K562 (cell line): ENCODE measurements at regions of chr17 and their contacts with region 1.

Region 1: GRCh38 chr17:27805520-27806146 is 5.3 kb upstream of the NOS2 start:
- DNase-seq: peak; percentile 79 to 88 (median 82)
- ATAC-seq: peak; percentile 98
- H3K4me3 ChIP-seq: no peak overlapping the region
- H3K27ac ChIP-seq: no peak overlapping the region
- H3K4me1 ChIP-seq: peaks cover 0 to 8% of the 10 kb centered on the region in 2 experiments; a peak in 3 of 5 replicates
- H3K27me3 ChIP-seq: peaks cover 2 to 27% of the 10 kb centered on the region in 2 experiments; a peak in 4 of 5 replicates
- CTCF ChIP-seq: peak; percentile 81 to 89 (median 87)
- EP300 ChIP-seq: no peak
- POLR2A ChIP-seq: no peak
- RAD21 ChIP-seq: peak; percentile 74 to 92

Region 2: GRCh38 chr17:27760069-27760885 is 45.4 kb before region 1 on chr17:
- CTCF ChIA-PET with region 1: no interaction called
- POLR2A ChIA-PET with region 1: no interaction called
- in situ Hi-C with region 1: no loop called
- intact Hi-C with region 1: loop called (anchors 5 kb)
- DNase-seq: peak; percentile 63 to 79 (median 70)
- ATAC-seq: peak; percentile 86
- H3K4me3 ChIP-seq: no peak overlapping the region
- H3K27ac ChIP-seq: no peak overlapping the region
- H3K4me1 ChIP-seq: peaks cover 0 to 11% of the 10 kb centered on the region in 2 experiments; a peak in 3 of 5 replicates
- H3K27me3 ChIP-seq: peaks cover 0 to 27% of the 10 kb centered on the region in 2 experiments; a peak in 3 of 5 replicates
- CTCF ChIP-seq: peak; percentile 82 to 95 (median 93)
- EP300 ChIP-seq: no peak
- POLR2A ChIP-seq: no peak
- RAD21 ChIP-seq: peak; percentile 81 to 89

Region 3: DNA sequence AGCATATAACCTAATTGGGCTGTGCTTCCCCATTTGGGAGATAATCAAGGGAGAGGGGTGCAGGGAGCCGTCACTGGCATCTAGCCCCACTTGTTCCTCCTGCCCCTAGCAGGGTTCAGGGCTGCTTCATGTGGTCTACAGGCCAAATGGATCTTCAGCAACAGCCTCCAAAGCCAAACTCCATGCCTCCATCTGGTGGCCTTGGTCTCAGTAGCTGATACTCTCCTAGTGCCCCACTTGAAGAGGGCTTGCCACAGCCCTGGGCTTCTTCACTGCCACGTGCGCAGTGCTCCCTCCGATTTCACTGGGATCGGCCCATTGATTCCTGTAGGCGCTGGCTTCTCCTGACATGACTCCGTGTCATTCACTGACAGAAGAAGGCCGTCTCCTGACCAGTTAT is 62.9 kb after region 1 on chr17:
- CTCF ChIA-PET with region 1: no interaction called
- POLR2A ChIA-PET with region 1: no interaction called
- in situ Hi-C with region 1: no loop called
- intact Hi-C with region 1: loop called (anchors 5 kb)
- DNase-seq: no peak
- ATAC-seq: no peak
- H3K4me3 ChIP-seq: no peak overlapping the region
- H3K27ac ChIP-seq: no peak overlapping the region
- H3K4me1 ChIP-seq: no peaks in the 10 kb centered on the region
- H3K27me3 ChIP-seq: peaks cover 10 to 15% of the 10 kb centered on the region in 2 experiments; a peak in 4 of 5 replicates
- CTCF ChIP-seq: peak in 1 of 3 experiments; percentile 10; a peak in 1 of 6 replicates
- EP300 ChIP-seq: no peak
- POLR2A ChIP-seq: no peak
- RAD21 ChIP-seq: 0 out of 4 replicates have a peak, but pooled peaks of 1 of the 2 experiments have one; percentile 32

Region 4: DNA sequence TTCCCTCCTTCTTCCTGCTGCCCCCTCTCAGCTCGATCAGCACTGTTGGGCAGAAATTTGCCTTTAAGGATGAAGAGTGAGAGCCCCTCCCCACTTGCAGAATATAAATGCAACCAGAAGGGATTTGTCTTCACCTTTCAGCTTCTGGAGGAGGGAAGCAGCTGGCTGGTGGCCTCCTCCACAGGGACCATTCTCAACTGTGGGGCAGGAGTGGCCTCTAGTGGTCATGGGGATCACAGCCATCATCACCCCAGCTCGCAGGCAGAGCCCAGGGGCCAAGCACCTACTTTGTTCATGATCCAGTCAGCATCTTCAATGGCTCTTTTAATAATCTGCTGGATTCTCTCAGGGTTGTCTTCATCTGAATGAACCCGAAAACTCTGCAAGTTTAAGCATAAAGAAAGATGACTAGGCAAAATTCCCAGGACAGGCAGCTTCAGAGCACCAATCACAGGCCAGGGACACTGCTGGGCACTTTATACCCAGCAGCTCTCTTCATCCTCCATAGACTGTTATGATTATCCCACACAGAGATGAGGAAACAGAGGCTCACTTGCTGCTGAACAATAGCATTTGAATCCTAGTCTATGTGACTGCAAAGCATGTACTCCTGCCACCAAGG is 74.5 kb after region 1 on chr17:
- CTCF ChIA-PET with region 1: interaction called, 4 read pairs
- POLR2A ChIA-PET with region 1: interaction called, 5 read pairs
- in situ Hi-C with region 1: no loop called
- intact Hi-C with region 1: loop called (anchors 1 kb)
- DNase-seq: peak; percentile 78 to 85 (median 80)
- ATAC-seq: peak; percentile 98
- H3K4me3 ChIP-seq: no peak overlapping the region
- H3K27ac ChIP-seq: no peak overlapping the region
- H3K4me1 ChIP-seq: no peaks in the 10 kb centered on the region
- H3K27me3 ChIP-seq: peaks cover 21 to 40% of the 10 kb centered on the region in 2 experiments
- CTCF ChIP-seq: peak; percentile 90 to 95 (median 92)
- EP300 ChIP-seq: no peak
- POLR2A ChIP-seq: no peak
- RAD21 ChIP-seq: peak; percentile 87 to 92

Region 5: DNA sequence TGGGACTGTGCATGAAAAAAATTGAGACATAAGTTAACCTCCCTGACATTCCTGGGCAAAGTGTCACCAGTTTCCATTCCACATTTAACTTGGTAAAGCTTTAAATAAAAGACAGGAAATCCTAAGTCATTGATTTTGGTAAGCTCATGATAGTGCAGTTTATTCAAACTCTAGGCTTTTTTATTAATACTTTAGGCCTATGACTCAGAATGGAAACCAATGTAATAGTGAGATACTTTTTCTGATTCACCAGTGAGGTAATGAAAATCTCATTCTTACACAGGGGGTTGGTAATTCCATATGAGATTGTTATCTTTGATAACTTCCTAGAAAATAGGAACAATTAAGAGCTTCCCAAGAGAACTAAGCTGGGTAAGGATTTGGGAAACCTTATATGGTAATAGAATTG is 327.9 kb after region 1 on chr17:
- CTCF ChIA-PET with region 1: interaction called, 3 read pairs
- POLR2A ChIA-PET with region 1: interaction called, 3 read pairs
- in situ Hi-C with region 1: no loop called
- intact Hi-C with region 1: loop called (anchors 10 kb)
- DNase-seq: no peak
- ATAC-seq: no peak
- H3K4me3 ChIP-seq: no peak overlapping the region
- H3K27ac ChIP-seq: no peak overlapping the region
- H3K4me1 ChIP-seq: no peaks in the 10 kb centered on the region
- H3K27me3 ChIP-seq: no peaks in the 10 kb centered on the region
- CTCF ChIP-seq: no peak
- EP300 ChIP-seq: no peak
- POLR2A ChIP-seq: no peak
- RAD21 ChIP-seq: no peak

Region 6: DNA sequence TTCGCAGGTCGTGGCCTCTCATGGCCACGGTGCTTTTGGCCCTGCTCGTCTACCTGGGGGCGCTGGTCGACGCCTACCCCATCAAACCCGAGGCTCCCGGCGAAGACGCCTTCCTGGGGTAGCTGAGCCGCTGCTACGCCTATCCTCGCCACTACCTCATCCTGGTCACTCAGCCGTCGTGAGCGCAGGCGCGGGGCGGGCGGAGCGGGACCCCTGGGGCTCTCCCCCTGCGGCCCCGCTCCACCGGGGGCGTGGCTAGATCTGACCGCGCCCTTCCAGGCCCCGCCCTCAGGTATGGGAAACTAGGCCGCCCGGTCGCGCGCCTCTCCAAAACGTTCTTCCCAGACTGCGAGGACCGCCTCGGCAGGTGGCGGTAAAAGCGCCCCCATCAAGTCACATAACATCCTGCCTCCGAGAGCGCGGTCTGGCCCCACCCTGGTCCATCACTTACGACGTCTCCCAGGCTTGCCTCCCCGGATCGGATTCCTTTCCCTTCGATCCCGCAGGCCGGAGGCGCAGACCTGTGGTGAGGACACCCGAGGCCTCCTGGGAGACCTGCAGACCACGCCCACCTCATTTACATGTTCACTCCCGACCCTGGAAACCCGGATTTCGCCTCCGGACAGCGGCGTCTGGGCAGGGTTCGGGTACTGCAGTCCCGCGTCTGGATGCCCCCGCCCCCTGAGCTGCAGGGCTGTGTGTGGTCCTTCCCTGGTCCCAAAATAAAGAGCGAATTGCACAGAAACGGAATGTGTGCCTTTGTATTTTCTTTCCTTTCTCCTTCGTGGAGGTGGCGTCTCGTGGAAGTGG is 421.9 kb after region 1 on chr17:
- CTCF ChIA-PET with region 1: no interaction called
- POLR2A ChIA-PET with region 1: no interaction called
- in situ Hi-C with region 1: loop called (anchors 10 kb)
- intact Hi-C with region 1: no loop called
- DNase-seq: peak in 1 of 4 experiments; percentile 25
- ATAC-seq: no peak
- H3K4me3 ChIP-seq: no peak overlapping the region
- H3K27ac ChIP-seq: no peak overlapping the region
- H3K4me1 ChIP-seq: peaks cover 14 to 43% of the 10 kb centered on the region in 2 experiments; a peak in 4 of 5 replicates
- H3K27me3 ChIP-seq: no peaks in the 10 kb centered on the region; a peak in 1 of 5 replicates
- CTCF ChIP-seq: no peak
- EP300 ChIP-seq: no peak
- POLR2A ChIP-seq: no peak
- RAD21 ChIP-seq: no peak

Region 7: GRCh38 chr17:28252436-28252835 is 446.8 kb after region 1 on chr17:
- CTCF ChIA-PET with region 1: interaction called, 7 read pairs
- POLR2A ChIA-PET with region 1: no interaction called
- in situ Hi-C with region 1: no loop called
- intact Hi-C with region 1: loop called (anchors 1 kb)
- DNase-seq: no peak
- ATAC-seq: no peak
- H3K4me3 ChIP-seq: no peak overlapping the region
- H3K27ac ChIP-seq: no peak overlapping the region
- H3K4me1 ChIP-seq: peaks cover 0 to 28% of the 10 kb centered on the region in 2 experiments; a peak in 3 of 5 replicates
- H3K27me3 ChIP-seq: peaks cover 7 to 25% of the 10 kb centered on the region in 2 experiments; a peak in 3 of 5 replicates
- CTCF ChIP-seq: no peak
- EP300 ChIP-seq: no peak
- POLR2A ChIP-seq: no peak
- RAD21 ChIP-seq: no peak